Sigmoid colon (tissue), 7 donors: ENCODE measurements at regions of chr5 and their contacts with region 1.

Region 1: GRCh38 chr5:69217548-69218526 is 16.8 kb upstream of the CDK7 start:
- DNase-seq: peak; percentile 98
- H3K4me3 ChIP-seq: peak overlapping the region; percentile 82 to 100 (median 100)
- H3K27ac ChIP-seq: peak overlapping the region; percentile 92 to 99 (median 96)
- H3K4me1 ChIP-seq: peaks cover 0 to 13% (median 9%) of the 10 kb centered on the region in 4 donors
- H3K27me3 ChIP-seq: no peaks in the 10 kb centered on the region
- CTCF ChIP-seq: peak in 2 of 4 experiments; percentile 59 to 61
- EP300 ChIP-seq: no peak
- POLR2A ChIP-seq: peak; percentile 81 to 91

Region 2: GRCh38 chr5:69093771-69094482 is 123.9 kb before region 1 on chr5 and contains the start of gene SLC30A5:
- intact Hi-C with region 1: loop called (anchors 1 kb)
- DNase-seq: peak; percentile 100
- H3K4me3 ChIP-seq: peak within 1 kb of the TSS; percentile 81 to 96 (median 88)
- H3K27ac ChIP-seq: peak within 1 kb of the TSS; percentile 90 to 98 (median 96)
- H3K4me1 ChIP-seq: peaks cover 0 to 26% (median 17%) of the 10 kb centered on the region in 4 donors
- H3K27me3 ChIP-seq: no peaks in the 10 kb centered on the region
- CTCF ChIP-seq: peak; percentile 82 to 93 (median 90)
- EP300 ChIP-seq: no peak
- POLR2A ChIP-seq: peak in 1 of 2 donors; percentile 75
- total RNA-seq, gene SLC30A5: 37.2 to 56.4 (median 44.4) TPM

Region 3: DNA sequence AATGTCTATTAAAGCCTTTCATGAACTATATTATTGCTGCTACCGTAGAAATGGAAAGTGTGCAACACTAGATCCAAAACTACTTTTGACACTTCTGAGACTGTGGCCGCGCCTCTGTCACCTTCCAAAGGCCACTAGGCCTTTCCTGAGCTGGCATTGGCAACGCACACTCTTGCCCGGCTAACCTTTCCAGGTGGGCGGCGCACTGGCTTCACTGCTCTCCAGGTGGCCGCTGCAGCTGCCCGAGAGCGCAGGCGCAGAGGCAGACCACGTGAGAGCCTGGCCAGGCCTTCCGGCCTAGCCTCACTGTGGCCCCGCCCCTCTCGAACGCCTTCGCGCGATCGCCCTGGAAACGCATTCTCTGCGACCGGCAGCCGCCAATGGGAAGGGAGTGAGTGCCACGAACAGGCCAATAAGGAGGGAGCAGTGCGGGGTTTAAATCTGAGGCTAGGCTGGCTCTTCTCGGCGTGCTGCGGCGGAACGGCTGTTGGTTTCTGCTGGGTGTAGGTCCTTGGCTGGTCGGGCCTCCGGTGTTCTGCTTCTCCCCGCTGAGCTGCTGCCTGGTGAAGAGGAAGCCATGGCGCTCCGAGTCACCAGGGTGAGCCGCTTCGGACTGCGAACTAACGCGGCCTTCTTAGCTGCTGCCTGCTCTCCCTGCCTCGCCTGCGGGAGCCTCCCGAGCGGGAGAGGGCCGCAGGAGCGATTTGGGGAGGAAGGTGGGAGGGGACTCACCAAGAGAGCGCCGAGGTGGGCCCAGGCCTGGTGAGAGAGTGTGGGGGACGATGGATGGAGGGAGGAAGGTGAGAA is 50.9 kb before region 1 on chr5 and contains the start of gene CCNB1:
- intact Hi-C with region 1: loop called (anchors 2 kb)
- DNase-seq: peak; percentile 98
- H3K4me3 ChIP-seq: peak within 1 kb of the TSS; percentile 44 to 67 (median 60)
- H3K27ac ChIP-seq: peak within 1 kb of the TSS; percentile 57 to 69 (median 61)
- H3K4me1 ChIP-seq: peaks cover 0 to 17% (median 11%) of the 10 kb centered on the region in 4 donors
- H3K27me3 ChIP-seq: no peaks in the 10 kb centered on the region
- CTCF ChIP-seq: peak in 1 of 4 experiments; percentile 8
- EP300 ChIP-seq: no peak
- POLR2A ChIP-seq: no peak
- total RNA-seq, gene CCNB1: 2.3 to 3.6 (median 2.5) TPM

Region 4: GRCh38 chr5:69189162-69190086 is 28.4 kb before region 1 on chr5 and contains the start of gene CENPH:
- intact Hi-C with region 1: loop called (anchors 2 kb)
- DNase-seq: peak; percentile 93
- H3K4me3 ChIP-seq: peak within 1 kb of the TSS; percentile 60 to 80 (median 70)
- H3K27ac ChIP-seq: peak within 1 kb of the TSS; percentile 56 to 79 (median 76)
- H3K4me1 ChIP-seq: peaks cover 0 to 17% (median 15%) of the 10 kb centered on the region in 4 donors
- H3K27me3 ChIP-seq: no peaks in the 10 kb centered on the region
- CTCF ChIP-seq: no peak
- EP300 ChIP-seq: no peak
- POLR2A ChIP-seq: no peak
- total RNA-seq, gene CENPH: 1.3 to 3.8 (median 2.6) TPM

Region 5: DNA sequence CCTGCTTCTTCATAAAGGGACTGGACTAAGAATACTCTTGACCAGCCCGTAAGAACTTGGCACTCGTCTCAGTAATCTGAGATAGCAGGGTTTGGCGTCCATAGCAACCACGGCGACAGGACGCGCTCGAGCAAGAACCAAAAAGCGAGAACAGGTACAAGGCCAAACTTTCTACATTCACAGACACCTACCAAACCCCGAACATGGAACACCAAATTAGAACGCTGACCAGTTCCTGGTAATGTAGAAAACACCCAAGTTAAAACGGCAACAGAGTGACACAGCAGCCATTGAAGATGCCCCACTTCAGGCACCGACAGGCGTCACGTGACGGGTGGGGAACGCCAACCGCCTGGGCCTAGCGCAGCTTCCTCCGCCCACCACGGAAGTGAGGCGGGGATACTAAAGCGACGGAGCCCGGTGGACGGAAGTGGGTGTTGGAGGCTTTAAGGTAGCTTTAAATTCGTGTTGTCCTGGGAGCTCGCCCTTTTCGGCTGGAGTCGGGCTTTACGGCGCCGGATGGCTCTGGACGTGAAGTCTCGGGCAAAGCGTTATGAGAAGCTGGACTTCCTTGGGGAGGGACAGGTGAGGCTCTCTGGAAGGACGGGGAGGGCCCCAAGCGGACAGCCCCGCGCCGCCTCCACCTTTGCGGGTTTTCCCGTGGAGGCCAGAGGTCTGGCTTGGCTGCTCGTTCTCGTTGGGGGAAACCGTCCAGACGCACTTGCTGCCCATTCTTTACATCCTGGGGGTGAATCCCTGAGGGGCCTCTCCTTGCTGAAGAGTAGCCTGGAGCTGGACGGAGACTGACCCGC is 16.8 kb after region 1 on chr5 and contains the start of gene CDK7:
- intact Hi-C with region 1: loop called (anchors 2 kb)
- DNase-seq: peak; percentile 95
- H3K4me3 ChIP-seq: peak within 1 kb of the TSS; percentile 71 to 92 (median 74)
- H3K27ac ChIP-seq: peak within 1 kb of the TSS; percentile 81 to 89 (median 84)
- H3K4me1 ChIP-seq: peaks cover 0 to 31% (median 24%) of the 10 kb centered on the region in 4 donors
- H3K27me3 ChIP-seq: no peaks in the 10 kb centered on the region
- CTCF ChIP-seq: no peak
- EP300 ChIP-seq: no peak
- POLR2A ChIP-seq: no peak
- total RNA-seq, gene CDK7: 7.2 to 18.5 (median 13.8) TPM